ENCODE measurements at regions of chr14 and their contacts with region 1.

Region 1: DNA sequence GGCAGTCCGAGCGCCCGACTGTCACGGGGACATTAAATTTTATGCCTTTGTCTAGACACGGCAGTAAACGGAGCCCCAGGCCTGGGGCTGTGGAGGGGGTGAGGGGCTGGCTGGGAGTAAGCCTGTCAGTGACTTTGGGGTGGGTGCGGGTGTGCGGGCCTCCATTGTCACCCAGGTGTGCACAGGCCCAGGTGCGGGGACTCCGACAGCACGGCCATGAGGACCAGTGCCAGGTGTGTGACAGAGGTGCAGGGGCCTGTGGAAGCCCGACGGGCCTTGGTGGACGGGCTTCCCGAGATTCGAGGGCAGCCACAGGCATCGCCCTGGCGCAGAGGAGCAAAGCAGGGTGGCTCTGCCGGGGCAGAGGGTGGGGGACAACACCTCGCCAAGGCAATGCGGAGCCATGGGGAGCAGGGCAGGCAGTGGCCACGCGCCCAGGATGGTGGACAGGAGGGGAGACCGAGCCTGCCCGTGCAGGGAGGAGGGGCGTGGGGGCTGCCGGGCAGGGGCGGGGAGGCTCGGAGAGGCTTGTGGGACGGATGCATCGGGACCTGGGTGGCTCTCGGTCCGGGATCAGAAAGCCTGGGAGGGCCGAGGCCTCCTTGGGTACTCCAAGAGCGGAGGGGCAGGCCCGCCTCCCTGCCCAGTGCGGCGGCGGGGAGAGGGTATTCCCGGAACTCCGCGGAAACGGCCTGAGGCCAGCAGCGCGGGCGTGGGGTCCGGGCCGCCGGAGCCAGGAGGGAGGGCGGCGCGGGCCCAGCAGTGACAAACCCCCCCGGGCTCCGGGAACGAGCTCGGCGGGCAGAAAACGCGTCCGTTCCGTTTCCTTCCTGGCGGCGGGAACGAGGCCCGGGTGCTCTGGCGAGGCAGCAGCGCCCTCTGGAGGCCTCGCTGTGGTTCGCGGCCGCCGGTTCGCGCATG is 1.5 kb downstream of the TMEM121 start:
- DNase-seq: peak; percentile 87
- H3K4me3 ChIP-seq: peak overlapping the region; percentile 56 to 75 (median 60)
- H3K27ac ChIP-seq: peak overlapping the region; percentile 67 to 76 (median 73)
- H3K4me1 ChIP-seq: peaks cover 0 to 38% (median 32%) of the 10 kb centered on the region in 4 donors
- H3K27me3 ChIP-seq: peaks cover 0 to 21% (median 19%) of the 10 kb centered on the region in 3 donors
- CTCF ChIP-seq: peak; percentile 53 to 85 (median 71)
- EP300 ChIP-seq: no peak
- POLR2A ChIP-seq: peak in 1 of 2 donors; percentile 15

Region 2: DNA sequence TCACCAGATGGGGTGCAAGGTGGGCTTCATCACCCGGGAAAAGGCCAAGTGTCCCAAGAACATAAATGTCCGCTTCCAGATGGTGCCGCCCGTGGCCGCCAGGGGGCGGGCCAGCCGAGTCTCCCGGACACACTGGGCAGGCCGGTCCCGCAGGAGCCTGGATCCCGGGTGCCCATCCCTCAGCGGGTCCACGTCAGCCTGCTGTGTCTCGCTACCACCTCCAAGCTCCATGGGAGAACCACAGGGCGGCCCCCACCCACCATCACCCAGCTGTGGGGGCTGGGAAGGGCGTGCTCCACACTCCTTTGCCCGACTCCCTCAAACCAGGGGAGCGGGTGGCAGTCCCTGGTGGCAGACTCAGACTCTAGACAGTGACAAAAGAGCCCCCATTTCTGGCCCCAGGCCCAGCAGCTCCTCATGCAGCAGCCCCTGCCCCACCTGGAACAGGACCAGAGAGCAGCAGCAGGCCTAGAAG is 324.8 kb before region 1 on chr14:
- intact Hi-C with region 1: loop called (anchors 10 kb)
- DNase-seq: peak; percentile 87
- H3K4me3 ChIP-seq: no peak overlapping the region
- H3K27ac ChIP-seq: no peak overlapping the region
- H3K4me1 ChIP-seq: peaks cover 0 to 31% (median 27%) of the 10 kb centered on the region in 4 donors
- H3K27me3 ChIP-seq: peaks cover 18 to 47% (median 43%) of the 10 kb centered on the region in 3 donors
- CTCF ChIP-seq: peak; percentile 38 to 97 (median 82)
- EP300 ChIP-seq: no peak
- POLR2A ChIP-seq: no peak

Region 3: DNA sequence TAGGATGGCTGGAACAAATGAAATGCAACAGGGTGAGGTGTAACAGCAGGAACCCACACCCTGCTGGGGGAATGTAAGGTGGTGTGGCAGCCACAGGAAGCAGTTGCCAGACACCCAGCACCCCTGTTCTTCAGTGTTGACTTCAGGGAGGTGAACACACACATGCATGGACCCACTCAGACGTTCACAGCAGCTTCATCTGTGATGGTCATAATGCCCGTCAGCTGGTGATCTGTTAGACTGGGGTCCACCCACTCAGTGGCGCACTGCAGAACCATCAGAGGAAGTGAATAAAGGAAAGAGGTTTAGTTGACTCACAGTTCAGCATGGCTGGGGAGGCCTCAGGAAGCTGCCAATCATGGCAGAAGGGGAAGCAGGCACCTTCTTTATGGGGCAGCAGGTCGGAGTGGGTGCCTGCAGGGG is 152.3 kb before region 1 on chr14:
- intact Hi-C with region 1: loop called (anchors 1 kb)
- DNase-seq: no peak
- H3K4me3 ChIP-seq: no peak overlapping the region
- H3K27ac ChIP-seq: no peak overlapping the region
- H3K4me1 ChIP-seq: peaks cover 0 to 4% (median 0%) of the 10 kb centered on the region in 4 donors
- H3K27me3 ChIP-seq: no peaks in the 10 kb centered on the region
- CTCF ChIP-seq: no peak
- EP300 ChIP-seq: no peak
- POLR2A ChIP-seq: no peak

Region 4: DNA sequence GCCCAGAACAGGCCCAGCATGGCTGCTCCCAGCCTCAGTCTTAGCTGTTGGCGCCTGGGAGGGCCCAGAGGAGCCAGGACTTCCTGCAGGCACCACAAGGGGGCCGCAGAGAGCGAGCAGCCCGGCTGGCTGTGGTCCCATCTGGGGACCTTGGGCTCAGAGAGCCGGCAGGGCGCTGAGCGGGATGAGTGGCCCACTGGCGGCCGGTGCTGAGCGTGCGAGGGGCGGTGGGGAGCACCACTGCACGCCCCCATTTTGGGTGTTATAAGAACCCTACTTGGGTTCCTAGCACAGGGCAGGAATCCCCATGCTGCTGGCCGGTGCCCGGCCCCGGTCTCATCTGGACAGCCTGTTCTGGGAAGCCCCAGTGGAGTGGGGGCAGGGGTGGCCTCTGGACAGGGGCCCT is 79.2 kb before region 1 on chr14:
- intact Hi-C with region 1: loop called (anchors 5 kb)
- DNase-seq: peak; percentile 88
- H3K4me3 ChIP-seq: no peak overlapping the region
- H3K27ac ChIP-seq: peak overlapping the region in 1 of 4 donors; percentile 49
- H3K4me1 ChIP-seq: peaks cover 0 to 16% (median 12%) of the 10 kb centered on the region in 4 donors
- H3K27me3 ChIP-seq: no peaks in the 10 kb centered on the region
- CTCF ChIP-seq: peak; percentile 74 to 98 (median 82)
- EP300 ChIP-seq: no peak
- POLR2A ChIP-seq: no peak

Region 5: GRCh38 chr14:105473677-105474482 is 54.0 kb before region 1 on chr14:
- intact Hi-C with region 1: loop called (anchors 10 kb)
- DNase-seq: peak; percentile 92
- H3K4me3 ChIP-seq: peak overlapping the region; percentile 36 to 96 (median 64)
- H3K27ac ChIP-seq: peak overlapping the region; percentile 77 to 89 (median 80)
- H3K4me1 ChIP-seq: peaks cover 0 to 66% (median 61%) of the 10 kb centered on the region in 4 donors
- H3K27me3 ChIP-seq: peaks cover 3 to 56% (median 9%) of the 10 kb centered on the region in 3 donors
- CTCF ChIP-seq: no peak
- EP300 ChIP-seq: no peak
- POLR2A ChIP-seq: no peak

Region 6: GRCh38 chr14:105490572-105491366 is 37.2 kb before region 1 on chr14 and contains the start of gene TEDC1:
- intact Hi-C with region 1: loop called (anchors 1 kb)
- DNase-seq: peak; percentile 100
- H3K4me3 ChIP-seq: peak within 1 kb of the TSS; percentile 37 to 85 (median 73)
- H3K27ac ChIP-seq: peak within 1 kb of the TSS; percentile 91 to 99 (median 95)
- H3K4me1 ChIP-seq: peaks cover 0 to 52% (median 49%) of the 10 kb centered on the region in 4 donors
- H3K27me3 ChIP-seq: peaks cover 3 to 27% (median 24%) of the 10 kb centered on the region in 3 donors
- CTCF ChIP-seq: peak; percentile 11 to 79 (median 24)
- EP300 ChIP-seq: peak in 1 of 4 donors; percentile 3
- POLR2A ChIP-seq: no peak
- total RNA-seq, gene TEDC1: 0.16 to 5.2 (median 1.0) TPM

Region 7: DNA sequence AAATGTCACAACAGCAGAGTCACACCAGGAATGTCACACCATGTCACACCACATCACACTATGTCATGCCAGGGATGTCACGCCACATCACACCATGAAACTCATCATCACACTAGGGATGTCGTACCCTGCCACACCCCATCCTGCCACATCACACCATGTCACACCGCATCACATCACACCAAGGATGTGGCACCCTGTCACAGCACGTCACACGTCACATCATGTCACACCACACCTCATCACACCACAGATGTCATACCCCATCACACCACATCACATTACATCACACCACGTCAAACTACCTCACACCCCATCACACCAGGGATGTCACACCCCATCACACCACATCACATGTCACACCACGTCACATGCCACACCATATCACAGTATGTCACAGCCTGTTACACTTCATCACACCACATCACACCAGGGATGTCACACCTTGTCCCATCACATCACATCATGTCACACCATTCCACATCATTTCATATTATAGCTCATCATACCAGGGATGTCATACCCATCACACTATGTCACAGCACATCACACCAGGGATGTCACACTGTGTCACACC is 89.4 kb after region 1 on chr14:
- intact Hi-C with region 1: no loop called
- DNase-seq: no peak
- H3K4me3 ChIP-seq: no peak overlapping the region
- H3K27ac ChIP-seq: no peak overlapping the region
- H3K4me1 ChIP-seq: peaks cover 0 to 17% (median 4%) of the 10 kb centered on the region in 4 donors
- H3K27me3 ChIP-seq: no peaks in the 10 kb centered on the region
- CTCF ChIP-seq: no peak
- EP300 ChIP-seq: no peak
- POLR2A ChIP-seq: no peak

Region 8: GRCh38 chr14:106024983-106025604 is 497.2 kb after region 1 on chr14:
- intact Hi-C with region 1: no loop called
- DNase-seq: no peak
- H3K4me3 ChIP-seq: no peak overlapping the region
- H3K27ac ChIP-seq: no peak overlapping the region
- H3K4me1 ChIP-seq: no peaks in the 10 kb centered on the region
- H3K27me3 ChIP-seq: no peaks in the 10 kb centered on the region
- CTCF ChIP-seq: no peak
- EP300 ChIP-seq: no peak
- POLR2A ChIP-seq: no peak

Measured in sigmoid colon (tissue), 7 donors.